ENCODE measurements at regions of chr3 and their contacts with region 1.

Region 1: GRCh38 chr3:9946112-9947024 is 5.8 kb downstream of the PRRT3 start:
- DNase-seq: peak; percentile 87
- H3K4me3 Mint-ChIP-seq: peak overlapping the region; percentile 78
- H3K27ac Mint-ChIP-seq: peak overlapping the region; percentile 74
- H3K4me1 Mint-ChIP-seq: peaks cover 14% of the 10 kb centered on the region
- H3K27me3 Mint-ChIP-seq: no peaks in the 10 kb centered on the region

Region 2: GRCh38 chr3:9749645-9750555 is 196.5 kb before region 1 on chr3 and contains the start of gene OGG1:
- CTCF ChIA-PET with region 1: no interaction called
- POLR2A ChIA-PET with region 1: no interaction called
- intact Hi-C with region 1: no loop called
- DNase-seq: peak; percentile 98
- H3K4me3 Mint-ChIP-seq: peak within 1 kb of the TSS; percentile 96
- H3K27ac Mint-ChIP-seq: peak within 1 kb of the TSS; percentile 88
- H3K4me1 Mint-ChIP-seq: peaks cover 50% of the 10 kb centered on the region
- H3K27me3 Mint-ChIP-seq: no peaks in the 10 kb centered on the region
- total RNA-seq, gene OGG1: 35.7 to 36.5 TPM

Region 3: DNA sequence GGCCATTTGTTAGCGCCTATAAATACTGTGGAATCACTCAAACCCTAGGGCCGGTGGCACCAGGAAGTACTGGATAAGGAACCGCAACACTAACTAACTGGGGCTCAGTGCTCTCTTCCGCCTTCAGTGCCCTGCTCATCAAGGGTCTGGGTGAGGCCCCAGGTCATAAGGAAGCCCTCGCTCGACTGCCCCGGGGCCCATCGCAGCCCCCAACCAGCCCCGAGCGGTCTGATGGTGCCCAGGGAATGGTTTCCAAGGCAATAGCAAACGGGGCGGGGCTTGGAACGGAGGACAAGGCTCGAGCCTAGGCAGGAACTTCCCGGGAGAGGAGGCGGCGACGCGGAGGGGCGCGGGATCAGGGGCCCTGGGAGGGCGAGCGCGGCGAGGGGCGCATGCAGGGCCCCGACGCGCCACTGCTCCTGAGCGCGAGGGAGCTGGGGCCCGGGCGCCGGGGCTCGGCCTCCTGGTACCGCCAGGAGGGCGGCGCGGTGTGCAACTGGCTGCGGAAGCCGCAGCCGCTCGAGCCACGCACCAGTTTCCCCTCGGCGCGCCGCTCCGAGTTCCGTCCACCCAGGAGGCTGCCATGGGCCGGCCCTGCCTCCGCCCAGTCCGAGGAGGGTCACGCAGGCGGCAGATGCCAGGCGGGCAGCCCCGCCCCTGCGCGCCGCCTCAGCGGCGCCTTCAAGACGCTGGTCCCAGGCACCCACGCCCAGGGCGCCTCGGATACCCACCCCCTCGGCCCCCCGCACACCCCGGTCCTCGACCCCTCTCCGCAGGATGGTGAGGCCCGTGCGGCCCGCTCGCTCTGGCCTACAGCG is 136.5 kb before region 1 on chr3 and contains the start of gene TTLL3:
- CTCF ChIA-PET with region 1: interaction called, 10 read pairs
- POLR2A ChIA-PET with region 1: interaction called, 3 read pairs
- intact Hi-C with region 1: no loop called
- DNase-seq: peak; percentile 55
- H3K4me3 Mint-ChIP-seq: peak within 1 kb of the TSS; percentile 81
- H3K27ac Mint-ChIP-seq: peak within 1 kb of the TSS; percentile 83
- H3K4me1 Mint-ChIP-seq: peaks cover 30% of the 10 kb centered on the region
- H3K27me3 Mint-ChIP-seq: no peaks in the 10 kb centered on the region
- total RNA-seq, gene TTLL3: 49.6 to 49.7 TPM

Measured in activated CD4-positive, alpha-beta memory T cell treated with anti-CD3 and anti-CD28 coated beads for 36 hours (primary cell).